ENCODE measurements at regions of chr17 and their contacts with region 1.

Region 1: GRCh38 chr17:73145641-73146040 is 19.2 kb upstream of the SSTR2 start:
- DNase-seq: no peak
- H3K4me3 Mint-ChIP-seq: no peak overlapping the region
- H3K27ac Mint-ChIP-seq: no peak overlapping the region
- H3K4me1 Mint-ChIP-seq: peaks cover 15% of the 10 kb centered on the region
- H3K27me3 Mint-ChIP-seq: peaks cover 2% of the 10 kb centered on the region

Region 2: GRCh38 chr17:73107191-73107590 is 38.5 kb before region 1 on chr17:
- CTCF ChIA-PET with region 1: no interaction called
- POLR2A ChIA-PET with region 1: no interaction called
- DNase-seq: no peak
- H3K4me3 Mint-ChIP-seq: no peak overlapping the region
- H3K27ac Mint-ChIP-seq: no peak overlapping the region
- H3K4me1 Mint-ChIP-seq: no peaks in the 10 kb centered on the region
- H3K27me3 Mint-ChIP-seq: no peaks in the 10 kb centered on the region

Region 3: DNA sequence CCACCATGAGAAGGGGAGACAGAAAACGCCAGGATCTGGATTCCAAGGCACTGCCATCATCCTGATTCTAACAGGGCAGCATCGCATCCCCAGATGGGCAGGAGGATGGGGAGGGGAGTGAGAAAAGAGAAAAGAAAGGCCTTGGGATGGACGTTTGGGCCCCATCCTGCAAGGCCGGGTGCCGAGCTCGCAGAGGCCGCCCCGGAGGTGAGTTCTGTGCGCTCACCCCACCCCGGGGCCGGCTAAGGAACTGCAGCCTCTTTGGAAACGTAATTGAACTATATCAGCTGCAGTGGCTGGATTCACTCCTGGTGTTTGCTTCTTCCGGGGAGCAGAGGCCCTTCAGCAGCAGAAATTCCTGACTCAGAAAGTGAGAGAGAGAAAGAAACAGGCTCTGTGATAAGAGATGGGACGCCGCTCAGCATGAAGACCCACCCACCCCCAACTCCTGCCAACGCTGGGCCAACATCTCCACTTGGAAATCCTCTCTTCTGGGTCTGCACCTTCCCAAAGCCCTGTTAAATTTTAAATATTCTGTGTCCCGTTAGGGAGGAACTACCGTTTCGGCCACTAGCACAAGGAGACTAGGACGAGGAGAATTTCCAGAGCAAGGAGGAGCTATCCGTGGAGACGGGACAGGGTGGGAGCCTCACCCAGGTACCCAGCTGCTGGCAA is 10.7 kb after region 1 on chr17:
- CTCF ChIA-PET with region 1: interaction called, 12 read pairs
- POLR2A ChIA-PET with region 1: no interaction called
- DNase-seq: peak; percentile 65
- H3K4me3 Mint-ChIP-seq: no peak overlapping the region
- H3K27ac Mint-ChIP-seq: no peak overlapping the region
- H3K4me1 Mint-ChIP-seq: peaks cover 7% of the 10 kb centered on the region
- H3K27me3 Mint-ChIP-seq: peaks cover 19% of the 10 kb centered on the region

Measured in activated CD4-positive, alpha-beta T cell treated with anti-CD3 and anti-CD28 coated beads, Interleukin-2, amount 10 ng/mL, durations not matched to agents 7 days and 5 days (primary cell).